HepG2 (cell line): ENCODE measurements at regions of chr17 and their contacts with region 1.

Region 1: GRCh38 chr17:1611715-1612114 is 16.9 kb downstream of the SLC43A2 start:
- DNase-seq: no peak
- ATAC-seq: no peak
- H3K4me3 ChIP-seq: no peak overlapping the region
- H3K27ac ChIP-seq: no peak overlapping the region
- H3K4me1 ChIP-seq: peaks cover 29% of the 10 kb centered on the region
- H3K27me3 ChIP-seq: no peaks in the 10 kb centered on the region
- CTCF ChIP-seq: no peak
- EP300 ChIP-seq: no peak
- POLR2A ChIP-seq: no peak
- RAD21 ChIP-seq: no peak

Region 2: GRCh38 chr17:1153795-1154546 is 457.7 kb before region 1 on chr17:
- CTCF ChIA-PET with region 1: no interaction called
- POLR2A ChIA-PET with region 1: no interaction called
- in situ Hi-C with region 1: no loop called
- intact Hi-C with region 1: loop called (anchors 5 kb)
- DNase-seq: peak; percentile 16
- ATAC-seq: peak; percentile 55
- H3K4me3 ChIP-seq: no peak overlapping the region
- H3K27ac ChIP-seq: no peak overlapping the region
- H3K4me1 ChIP-seq: no peaks in the 10 kb centered on the region
- H3K27me3 ChIP-seq: peaks cover 15 to 59% of the 10 kb centered on the region in 2 experiments; a peak in 4 of 5 replicates
- CTCF ChIP-seq: no peak
- EP300 ChIP-seq: no peak
- POLR2A ChIP-seq: no peak
- RAD21 ChIP-seq: no peak

Region 3: GRCh38 chr17:1422907-1423306 is 188.8 kb before region 1 on chr17:
- CTCF ChIA-PET with region 1: no interaction called
- POLR2A ChIA-PET with region 1: no interaction called
- in situ Hi-C with region 1: no loop called
- intact Hi-C with region 1: no loop called
- DNase-seq: no peak
- ATAC-seq: no peak
- H3K4me3 ChIP-seq: no peak overlapping the region
- H3K27ac ChIP-seq: no peak overlapping the region
- H3K4me1 ChIP-seq: no peaks in the 10 kb centered on the region
- H3K27me3 ChIP-seq: no peaks in the 10 kb centered on the region
- CTCF ChIP-seq: no peak
- EP300 ChIP-seq: no peak
- POLR2A ChIP-seq: no peak
- RAD21 ChIP-seq: no peak

Region 4: GRCh38 chr17:1673041-1673785 is 61.5 kb after region 1 on chr17:
- CTCF ChIA-PET with region 1: no interaction called
- POLR2A ChIA-PET with region 1: no interaction called
- in situ Hi-C with region 1: no loop called
- intact Hi-C with region 1: no loop called
- DNase-seq: no peak
- ATAC-seq: no peak
- H3K4me3 ChIP-seq: no peak overlapping the region
- H3K27ac ChIP-seq: no peak overlapping the region
- H3K4me1 ChIP-seq: no peaks in the 10 kb centered on the region
- H3K27me3 ChIP-seq: no peaks in the 10 kb centered on the region
- CTCF ChIP-seq: no peak
- EP300 ChIP-seq: no peak
- POLR2A ChIP-seq: 0 out of 4 replicates have a peak, but pooled peaks of 1 of the 2 experiments have one; percentile 12
- RAD21 ChIP-seq: no peak